ENCODE measurements at regions of chr7 and their contacts with region 1.

Region 1: DNA sequence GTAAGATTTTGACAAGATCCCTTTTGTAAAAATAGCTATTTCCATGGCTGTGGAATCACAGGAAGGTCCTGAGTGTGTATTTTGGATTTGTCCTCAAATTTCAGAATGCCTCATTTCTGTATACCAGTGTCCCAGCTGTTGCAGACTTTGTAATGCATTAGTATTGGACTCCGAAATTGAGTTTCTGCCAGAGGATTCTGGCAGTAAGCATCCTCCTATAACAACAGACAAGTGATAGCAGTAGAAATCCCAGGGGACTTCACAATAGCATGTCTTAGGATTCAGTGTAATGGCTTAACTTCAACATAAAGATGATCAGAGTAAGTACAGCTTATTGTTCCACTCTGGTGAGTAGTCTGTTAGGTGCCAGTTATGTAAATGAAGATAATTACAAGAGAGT is 104.6 kb downstream of the FOXP2 start:
- DNase-seq: no peak
- H3K4me3 Mint-ChIP-seq: no peak overlapping the region
- H3K27ac Mint-ChIP-seq: no peak overlapping the region
- H3K4me1 Mint-ChIP-seq: no peaks in the 10 kb centered on the region
- H3K27me3 Mint-ChIP-seq: no peaks in the 10 kb centered on the region

Region 2: GRCh38 chr7:114574384-114574783 is 55.1 kb after region 1 on chr7:
- CTCF ChIA-PET with region 1: no interaction called
- intact Hi-C with region 1: loop called (anchors 10 kb)
- DNase-seq: no peak
- H3K4me3 Mint-ChIP-seq: no peak overlapping the region
- H3K27ac Mint-ChIP-seq: no peak overlapping the region
- H3K4me1 Mint-ChIP-seq: no peaks in the 10 kb centered on the region
- H3K27me3 Mint-ChIP-seq: peaks cover 2% of the 10 kb centered on the region

Measured in activated naive CD4-positive, alpha-beta T cell treated with anti-CD3 and anti-CD28 coated beads for 36 hours (primary cell).